Ascending aorta (tissue), 2 donors: ENCODE measurements at regions of chr3 and their contacts with region 1.

Region 1: DNA sequence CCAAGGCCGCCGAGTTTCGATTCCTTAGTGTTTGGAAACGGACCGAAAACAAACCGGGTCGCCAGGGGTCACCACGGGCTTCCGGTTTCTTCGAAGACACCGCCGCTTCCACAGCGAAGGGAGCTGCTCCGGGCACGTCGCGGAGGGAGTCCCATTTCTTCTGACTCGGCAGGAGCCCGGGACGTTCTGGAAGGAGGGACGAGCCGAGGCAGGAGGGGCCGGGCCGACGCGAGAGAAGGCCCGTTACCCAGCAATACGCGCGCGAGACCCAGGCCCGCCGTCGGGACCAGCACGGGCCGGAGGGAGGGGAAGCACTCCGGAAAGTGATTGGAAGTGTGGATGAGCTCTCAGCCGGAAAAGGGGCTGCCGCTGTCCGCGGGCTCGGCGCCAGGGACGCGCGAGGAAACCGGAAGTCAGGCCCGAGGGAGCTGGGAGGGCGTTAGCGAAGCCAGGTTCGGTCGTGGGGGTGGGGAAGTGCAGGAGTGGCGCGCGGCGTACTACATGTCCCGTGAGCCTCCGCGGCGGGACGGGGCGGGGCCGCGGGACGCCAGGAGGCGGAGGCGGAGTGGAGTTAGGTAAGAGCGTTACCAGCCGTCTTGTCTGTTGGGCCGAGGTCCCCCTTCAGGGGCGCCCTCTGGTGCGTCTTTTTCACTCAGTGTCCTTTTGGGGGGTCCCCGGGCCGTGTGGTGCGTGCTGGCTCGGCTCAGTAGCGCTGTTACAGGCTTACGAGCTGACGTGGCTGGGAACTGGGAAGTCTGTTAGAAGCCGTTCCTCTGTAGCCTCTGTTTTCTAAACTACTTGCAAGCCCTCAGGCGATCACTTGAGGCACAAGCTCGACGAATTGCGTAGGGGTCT is at the starts of genes AZI2 and ZCWPW2:
- DNase-seq: peak; percentile 76 to 98
- H3K4me3 ChIP-seq: peak within 1 kb of the TSS; percentile 88 to 95
- H3K27ac ChIP-seq: peak within 1 kb of the TSS; percentile 100
- H3K4me1 ChIP-seq: peaks cover 0 to 32% of the 10 kb centered on the region in 2 donors
- H3K27me3 ChIP-seq: no peaks in the 10 kb centered on the region
- CTCF ChIP-seq: peak in 1 of 3 experiments; percentile 31
- total RNA-seq, gene AZI2: 15.3 TPM
- total RNA-seq, gene ZCWPW2: not detected

Region 2: GRCh38 chr3:28241221-28242160 is 107.4 kb before region 1 on chr3 and contains the start of gene CMC1:
- intact Hi-C with region 1: loop called (anchors 5 kb)
- DNase-seq: peak; percentile 94 to 99
- H3K4me3 ChIP-seq: peak within 1 kb of the TSS; percentile 85 to 88
- H3K27ac ChIP-seq: peak within 1 kb of the TSS; percentile 67 to 79
- H3K4me1 ChIP-seq: peaks cover 5 to 12% of the 10 kb centered on the region in 2 donors
- H3K27me3 ChIP-seq: no peaks in the 10 kb centered on the region
- CTCF ChIP-seq: no peak
- total RNA-seq, gene CMC1: 68.5 TPM